AG04449 (cell line): ENCODE measurements at regions of chr2 and their contacts with region 1.

Region 1: GRCh38 chr2:1750933-1751766 is 6.8 kb upstream of the PXDN start:
- DNase-seq: no peak
- H3K4me3 ChIP-seq: no peak overlapping the region
- CTCF ChIP-seq: peak; percentile 96

Region 2: GRCh38 chr2:1591978-1592907 is 158.9 kb before region 1 on chr2:
- CTCF ChIA-PET with region 1: interaction called, 14 read pairs
- POLR2A ChIA-PET with region 1: no interaction called
- DNase-seq: no peak
- H3K4me3 ChIP-seq: no peak overlapping the region
- CTCF ChIP-seq: peak; percentile 71

Region 3: GRCh38 chr2:1675633-1676032 is 75.5 kb before region 1 on chr2:
- CTCF ChIA-PET with region 1: interaction called, 23 read pairs
- POLR2A ChIA-PET with region 1: interaction called, 3 read pairs
- DNase-seq: peak; percentile 87
- H3K4me3 ChIP-seq: no peak overlapping the region
- CTCF ChIP-seq: peak; percentile 89

Region 4: DNA sequence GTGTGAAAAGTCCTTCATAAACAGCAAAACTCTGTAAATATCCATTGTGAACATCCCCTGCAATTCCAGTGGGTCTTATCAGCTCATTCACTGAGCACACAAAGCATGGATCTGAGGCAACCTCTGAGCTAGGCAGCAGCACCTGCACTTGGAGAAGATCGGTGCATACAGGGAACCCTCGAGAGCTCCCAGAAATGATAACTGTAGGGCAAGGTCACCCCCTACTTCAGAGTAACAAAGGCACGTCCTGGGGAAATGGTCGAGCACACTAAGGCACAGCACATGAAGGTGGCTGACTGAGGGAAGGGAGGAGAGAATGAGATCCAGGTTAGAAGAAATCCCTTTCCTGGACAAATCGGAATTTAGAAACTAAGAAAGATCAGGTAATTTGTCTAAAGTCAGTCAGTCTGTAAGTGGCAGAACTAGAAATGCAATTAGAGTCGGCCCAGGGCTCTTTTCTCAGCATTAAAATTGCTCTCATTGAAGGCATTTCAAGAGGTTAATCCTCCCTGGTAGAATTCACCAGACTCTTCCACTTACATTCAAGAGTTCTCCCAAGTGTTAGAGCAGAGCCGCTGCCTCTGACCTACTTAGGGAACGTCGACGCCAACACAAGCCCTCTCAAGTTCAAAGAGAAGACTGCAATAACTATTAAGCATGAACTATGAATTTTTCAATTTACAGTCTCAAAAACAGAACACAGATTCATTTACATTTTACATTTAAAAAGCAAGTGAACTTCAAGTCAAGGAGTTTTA is 52.8 kb before region 1 on chr2:
- CTCF ChIA-PET with region 1: interaction called, 11 read pairs
- POLR2A ChIA-PET with region 1: interaction called, 3 read pairs
- DNase-seq: no peak
- H3K4me3 ChIP-seq: no peak overlapping the region
- CTCF ChIP-seq: no peak

Region 5: DNA sequence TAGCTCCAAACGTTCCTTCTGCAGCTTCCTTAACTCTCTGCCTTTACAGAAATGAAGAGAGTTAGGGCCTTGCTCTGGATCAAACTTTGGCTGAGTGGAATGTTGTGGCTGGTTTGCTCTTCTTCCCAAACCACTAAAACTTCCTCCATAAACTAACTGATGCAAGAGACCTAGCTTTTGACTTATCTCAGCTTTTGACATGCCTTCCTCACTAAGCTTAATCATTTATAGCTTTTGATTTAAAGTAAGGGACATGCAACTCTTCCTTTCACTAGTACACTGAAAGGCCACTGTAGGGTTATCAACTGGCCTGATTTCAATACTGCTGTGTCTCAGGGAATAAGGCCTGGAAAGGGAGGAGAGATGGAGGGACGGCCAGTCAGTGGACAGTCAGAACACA is 15.1 kb before region 1 on chr2:
- CTCF ChIA-PET with region 1: interaction called, 24 read pairs
- POLR2A ChIA-PET with region 1: interaction called, 4 read pairs
- DNase-seq: no peak
- H3K4me3 ChIP-seq: no peak overlapping the region
- CTCF ChIP-seq: no peak

Region 6: GRCh38 chr2:1791685-1792435 is 40.7 kb after region 1 on chr2:
- CTCF ChIA-PET with region 1: interaction called, 10 read pairs
- POLR2A ChIA-PET with region 1: interaction called, 3 read pairs
- DNase-seq: peak; percentile 94
- H3K4me3 ChIP-seq: no peak overlapping the region
- CTCF ChIP-seq: no peak

Region 7: DNA sequence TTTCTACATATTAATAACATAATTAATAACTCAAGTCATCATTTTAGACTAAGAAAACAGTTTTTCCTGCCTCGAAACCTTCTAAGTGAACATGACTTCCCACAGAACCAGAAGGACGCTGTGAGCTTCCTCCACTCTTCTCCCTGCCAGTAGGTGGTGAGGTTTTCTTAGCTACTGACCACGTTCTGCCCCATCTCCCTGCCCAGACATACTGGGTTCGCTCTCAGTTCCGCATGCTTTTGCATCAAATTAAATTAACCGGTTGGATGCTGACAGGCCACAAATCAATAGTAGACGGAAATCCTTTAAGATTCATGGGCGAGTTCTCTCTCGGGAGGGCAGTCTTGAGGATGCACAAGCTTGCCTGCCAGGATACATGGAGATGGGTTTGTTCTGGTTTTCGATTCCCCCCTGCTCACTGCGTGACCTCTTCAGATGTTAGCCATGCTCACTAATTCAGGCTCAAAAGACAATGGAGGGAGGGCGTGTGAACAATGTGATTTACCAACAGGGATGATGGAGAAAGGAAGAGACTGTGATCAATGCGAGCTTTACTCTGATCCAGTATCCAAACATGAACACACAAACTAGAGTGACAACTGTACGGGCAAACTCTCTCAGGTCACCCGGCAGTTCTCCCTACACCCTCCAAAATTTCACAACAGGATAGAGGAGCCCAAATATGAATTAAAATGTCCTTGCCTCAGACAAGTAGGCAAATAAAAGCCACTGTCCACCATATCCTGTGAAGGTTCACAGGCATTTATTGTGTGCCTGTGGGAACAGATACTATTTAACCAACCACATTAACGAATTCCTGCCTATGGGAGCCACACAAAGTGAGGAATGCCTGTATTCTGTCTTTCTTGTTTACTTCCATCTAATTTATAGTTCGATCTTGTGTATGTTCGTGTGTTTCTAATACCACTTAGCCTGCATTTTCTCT is 1250.7 kb after region 1 on chr2:
- CTCF ChIA-PET with region 1: no interaction called
- POLR2A ChIA-PET with region 1: no interaction called
- DNase-seq: no peak
- H3K4me3 ChIP-seq: no peak overlapping the region
- CTCF ChIP-seq: no peak